ENCODE measurements at regions of chr12 and their contacts with region 1.

Region 1: DNA sequence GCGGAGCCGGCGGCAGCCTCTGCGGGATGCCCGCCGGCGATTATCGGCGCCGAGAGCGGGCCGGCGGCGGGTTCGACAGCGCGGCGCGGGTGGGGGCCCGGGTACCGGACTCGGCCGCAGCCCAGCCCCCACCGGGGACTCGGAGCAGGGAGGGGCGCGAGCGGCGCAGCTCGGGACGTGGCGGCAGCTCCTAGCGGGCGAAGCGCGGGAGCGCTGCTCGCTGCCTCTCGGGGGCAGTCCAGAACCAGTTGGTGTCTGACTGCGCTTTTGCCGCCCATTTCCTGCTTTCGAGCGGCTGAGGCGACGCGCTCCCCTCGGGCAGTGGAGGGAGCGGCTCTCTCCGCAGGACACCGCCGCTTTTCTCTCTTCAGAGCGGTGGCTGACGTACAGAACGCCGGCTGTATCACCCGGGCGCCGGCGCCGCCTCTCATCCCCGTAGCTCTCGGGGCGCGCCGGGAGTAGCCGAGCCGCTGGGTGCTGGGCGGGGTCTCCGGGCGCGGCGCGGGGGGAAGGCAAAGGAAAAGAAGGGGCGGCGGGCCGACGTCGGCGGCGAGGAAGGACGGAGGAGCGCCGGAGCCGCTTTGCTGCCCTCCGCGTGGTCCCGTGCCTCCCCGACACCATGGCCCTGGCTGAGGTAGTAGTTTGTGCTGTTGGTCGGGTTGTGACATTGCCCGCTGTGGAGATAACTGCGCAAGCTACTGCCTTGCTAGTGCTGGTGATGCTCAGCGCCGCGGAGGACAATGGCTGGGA is 136.6 kb downstream of the MON2 start:
- DNase-seq: peak; percentile 87
- ATAC-seq: peak; percentile 85
- H3K4me3 Mint-ChIP-seq: peak overlapping the region; percentile 93
- H3K27ac Mint-ChIP-seq: peak overlapping the region; percentile 96
- H3K4me1 Mint-ChIP-seq: peaks cover 29% of the 10 kb centered on the region
- H3K27me3 Mint-ChIP-seq: no peaks in the 10 kb centered on the region

Region 2: GRCh38 chr12:62259993-62260732 is 343.1 kb before region 1 on chr12 and contains the start of gene USP15:
- POLR2A ChIA-PET with region 1: interaction called, 13 read pairs
- DNase-seq: peak; percentile 96
- ATAC-seq: peak; percentile 74
- H3K4me3 Mint-ChIP-seq: peak within 1 kb of the TSS; percentile 92
- H3K27ac Mint-ChIP-seq: peak within 1 kb of the TSS; percentile 98
- H3K4me1 Mint-ChIP-seq: peaks cover 38% of the 10 kb centered on the region
- H3K27me3 Mint-ChIP-seq: no peaks in the 10 kb centered on the region
- total RNA-seq, gene USP15: 163 TPM

Region 3: DNA sequence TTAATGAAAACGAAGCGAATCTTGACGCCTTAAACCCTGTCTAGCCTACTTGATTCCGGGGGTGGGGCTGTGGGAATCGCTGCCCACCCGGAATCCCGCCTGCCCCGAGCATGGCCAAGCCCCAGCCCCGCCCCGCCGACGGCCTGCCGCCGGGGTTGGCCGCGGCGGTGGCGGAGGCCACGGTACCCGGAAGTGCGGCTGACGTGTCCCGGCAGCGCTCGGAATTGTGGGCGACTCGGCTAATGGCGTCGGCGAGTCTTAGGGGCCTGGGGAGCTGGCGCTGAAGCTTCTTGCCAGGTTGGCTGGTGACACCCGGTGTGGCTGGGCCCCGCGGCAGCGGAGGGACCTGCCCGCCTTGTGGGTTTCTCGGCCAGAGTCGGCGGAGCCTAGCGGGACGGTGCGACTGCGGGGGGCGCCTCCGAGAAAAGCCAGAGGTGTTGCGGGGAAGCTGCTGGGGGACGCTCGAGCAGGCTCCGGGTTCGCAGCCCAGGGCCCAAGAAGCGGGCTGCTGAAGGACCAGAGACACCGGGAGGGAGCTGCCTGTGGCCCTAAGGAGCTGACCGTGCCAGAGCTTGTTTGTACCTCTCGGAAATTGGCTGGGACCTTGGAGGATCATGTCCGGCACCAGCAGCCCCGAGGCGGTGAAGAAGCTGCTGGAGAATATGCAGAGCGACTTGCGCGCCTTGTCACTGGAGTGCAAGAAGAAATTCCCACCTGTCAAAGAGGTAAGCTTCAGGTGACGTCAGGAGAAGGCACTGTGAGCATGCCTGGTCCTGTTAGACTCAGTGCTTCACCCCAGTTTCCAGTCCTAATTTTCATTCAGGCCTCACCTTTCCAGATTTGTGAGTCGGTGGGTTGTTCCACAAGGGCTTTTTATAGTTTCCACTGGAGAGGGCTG is 136.4 kb before region 1 on chr12 and contains the start of gene MON2:
- POLR2A ChIA-PET with region 1: interaction called, 16 read pairs
- DNase-seq: peak; percentile 91
- ATAC-seq: peak; percentile 97
- H3K4me3 Mint-ChIP-seq: peak within 1 kb of the TSS; percentile 80
- H3K27ac Mint-ChIP-seq: peak within 1 kb of the TSS; percentile 90
- H3K4me1 Mint-ChIP-seq: peaks cover 16% of the 10 kb centered on the region
- H3K27me3 Mint-ChIP-seq: peaks cover 2% of the 10 kb centered on the region
- total RNA-seq, gene MON2: 50.3 to 57.8 TPM

Region 4: DNA sequence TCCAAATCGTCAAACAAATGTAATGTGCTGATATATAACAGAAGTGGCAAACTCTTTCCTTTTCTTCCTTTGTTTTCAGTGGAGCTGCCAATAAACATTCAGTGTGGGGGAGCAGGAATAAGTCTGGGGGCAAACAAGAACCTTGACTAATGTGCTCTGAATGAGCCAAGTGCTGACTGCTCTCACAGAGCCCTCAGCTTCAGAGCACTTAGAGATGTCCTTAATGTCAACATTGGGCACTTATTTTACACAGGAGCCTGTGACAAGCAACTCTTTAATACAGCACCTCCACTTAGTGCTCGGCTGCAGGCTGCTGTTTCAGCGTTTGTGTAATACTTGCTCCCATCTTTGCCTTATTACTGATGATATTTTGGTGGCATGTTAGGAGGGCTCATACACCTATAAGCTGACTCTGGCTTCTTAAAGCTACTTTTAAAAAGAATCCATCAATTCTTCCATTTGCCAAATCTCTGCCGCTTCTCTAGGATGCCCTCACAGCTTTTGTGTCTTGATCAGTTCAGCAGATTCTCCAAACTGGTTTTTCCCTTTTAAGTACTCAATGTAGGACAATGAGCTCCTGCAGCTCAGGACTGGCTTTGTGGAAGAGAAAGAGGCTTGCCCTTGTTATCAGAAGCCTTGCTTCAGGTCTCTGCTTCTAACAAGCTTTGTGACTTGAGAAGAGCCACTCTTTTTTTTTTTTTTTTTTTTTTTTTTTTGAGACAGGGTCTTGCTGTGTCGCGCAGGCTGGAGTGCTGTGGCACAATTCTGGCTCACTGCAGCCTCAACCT is 70.0 kb after region 1 on chr12:
- POLR2A ChIA-PET with region 1: no interaction called
- DNase-seq: no peak
- ATAC-seq: no peak
- H3K4me3 Mint-ChIP-seq: no peak overlapping the region
- H3K27ac Mint-ChIP-seq: no peak overlapping the region
- H3K4me1 Mint-ChIP-seq: no peaks in the 10 kb centered on the region
- H3K27me3 Mint-ChIP-seq: peaks cover 19% of the 10 kb centered on the region